Gastrocnemius medialis (tissue), 4 donors: ENCODE measurements at regions of chr18 and their contacts with region 1.

Region 1: DNA sequence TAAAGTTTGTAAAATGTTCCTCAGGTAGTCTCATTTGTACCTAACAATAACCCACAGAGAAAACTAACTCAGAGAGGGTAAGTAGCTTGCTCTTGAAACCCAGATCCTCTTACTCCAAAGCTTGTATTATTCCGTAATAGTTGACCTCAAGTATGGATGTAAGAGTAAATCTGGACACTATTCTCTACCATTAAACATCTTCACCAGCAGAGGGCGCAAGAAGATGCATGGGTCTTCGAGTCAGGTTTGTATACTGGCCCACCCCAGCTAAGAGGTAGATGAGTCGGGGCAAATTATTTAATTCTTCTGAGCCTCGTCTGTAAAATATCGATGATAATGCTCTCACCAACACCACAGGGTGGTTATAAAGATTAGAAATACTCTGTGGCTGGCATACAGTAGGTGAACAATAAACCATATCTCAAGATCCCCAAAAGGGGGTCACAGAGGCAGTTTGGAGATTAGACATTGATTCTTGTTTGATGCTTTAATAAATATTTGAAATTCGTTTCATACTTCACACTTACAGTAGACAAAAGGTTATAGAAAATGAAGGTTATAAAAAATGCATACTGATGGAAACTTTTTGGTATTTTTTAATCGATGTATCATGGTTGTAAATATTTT is 3.5 kb upstream of the CABLES1 start:
- DNase-seq: peak in 1 of 2 donors; percentile 28
- ATAC-seq: peak; percentile 49 to 55
- H3K4me3 ChIP-seq: no peak overlapping the region
- H3K27ac ChIP-seq: no peak overlapping the region
- H3K4me1 ChIP-seq: peaks cover 6 to 12% of the 10 kb centered on the region in 2 donors
- H3K27me3 ChIP-seq: peaks cover 7 to 18% (median 7%) of the 10 kb centered on the region in 3 donors
- CTCF ChIP-seq: peak; percentile 71 to 81 (median 75)
- POLR2A ChIP-seq: no peak

Region 2: DNA sequence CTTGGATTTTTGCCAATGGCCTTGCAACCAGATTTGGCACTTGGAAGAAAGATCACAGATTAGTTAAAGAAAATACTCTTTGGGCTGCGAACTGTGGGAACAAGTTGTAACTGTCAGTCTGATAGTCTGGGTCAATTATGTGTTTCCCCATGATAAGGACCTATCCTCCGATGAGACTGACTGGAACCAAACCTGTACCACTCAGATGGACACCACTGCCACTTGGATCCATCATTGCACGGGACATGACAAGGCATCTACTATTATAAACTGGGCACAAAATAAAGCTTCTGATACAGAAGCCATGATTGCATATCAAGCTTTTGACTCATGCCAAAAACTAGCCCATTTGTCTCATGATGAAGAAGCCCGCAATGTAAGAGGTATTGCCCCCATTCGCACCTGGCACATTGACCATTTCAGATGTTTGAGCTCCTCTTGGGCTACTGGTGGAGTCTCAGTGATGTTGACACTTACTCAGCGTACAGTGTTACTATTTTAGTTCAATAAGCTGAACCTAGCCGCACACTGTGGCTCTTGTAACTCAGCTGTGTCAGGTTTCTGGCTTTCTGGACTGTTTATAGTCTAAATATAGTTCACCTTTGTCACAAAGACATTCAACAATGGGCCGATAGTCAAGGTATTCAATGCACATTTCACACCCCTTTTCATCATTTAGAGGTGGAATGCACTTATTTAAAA is 378.5 kb before region 1 on chr18:
- in situ Hi-C with region 1: no loop called
- intact Hi-C with region 1: no loop called
- DNase-seq: peak; percentile 14 to 32
- ATAC-seq: peak; percentile 97 to 98
- H3K4me3 ChIP-seq: no peak overlapping the region
- H3K27ac ChIP-seq: peak overlapping the region in 3 of 4 donors; percentile 3 to 65 (median 41)
- H3K4me1 ChIP-seq: peaks cover 6 to 12% of the 10 kb centered on the region in 2 donors
- H3K27me3 ChIP-seq: no peaks in the 10 kb centered on the region
- CTCF ChIP-seq: no peak
- POLR2A ChIP-seq: no peak

Region 3: GRCh38 chr18:23356915-23357601 is 225.3 kb after region 1 on chr18:
- in situ Hi-C with region 1: loop called in 1 of 4 experiments (anchors 5 kb)
- intact Hi-C with region 1: loop called (anchors 1 kb)
- DNase-seq: no peak
- ATAC-seq: peak; percentile 27 to 42
- H3K4me3 ChIP-seq: no peak overlapping the region
- H3K27ac ChIP-seq: peak overlapping the region; percentile 42 to 66 (median 50)
- H3K4me1 ChIP-seq: peaks cover 9 to 24% of the 10 kb centered on the region in 2 donors
- H3K27me3 ChIP-seq: no peaks in the 10 kb centered on the region
- CTCF ChIP-seq: no peak
- POLR2A ChIP-seq: no peak

Region 4: DNA sequence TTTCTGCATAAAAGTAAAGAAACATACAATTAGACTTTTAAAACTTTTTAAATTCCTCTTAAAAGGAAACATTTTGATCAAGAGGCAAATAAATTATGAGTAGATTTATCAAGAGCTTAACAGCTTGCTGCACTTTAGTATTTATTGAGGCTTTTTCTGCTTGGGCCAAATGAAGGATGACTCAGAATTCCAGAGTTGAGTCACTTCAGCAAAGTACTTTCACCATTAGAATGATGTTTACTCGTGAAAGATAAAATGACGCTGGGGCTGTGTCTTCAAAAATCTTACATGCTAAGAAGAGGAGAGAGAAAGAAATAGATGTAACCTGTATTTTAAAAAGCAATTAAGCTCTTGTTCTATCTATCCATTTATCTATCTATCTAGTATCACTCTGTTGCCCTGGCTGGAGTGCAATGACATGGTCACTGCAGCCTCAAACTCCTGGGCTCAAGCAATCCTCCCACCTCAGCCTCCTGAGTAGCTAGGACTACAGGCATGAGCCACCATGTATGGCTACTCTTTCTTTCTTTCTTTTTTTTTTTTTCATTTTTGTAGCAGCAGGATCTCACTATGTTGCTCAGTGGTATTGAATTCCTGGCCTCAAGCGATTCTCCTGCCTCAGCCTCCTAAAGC is 246.0 kb after region 1 on chr18:
- in situ Hi-C with region 1: loop called in 3 of 4 experiments (anchors 5 to 25 kb)
- intact Hi-C with region 1: loop called (anchors 2 kb)
- DNase-seq: no peak
- ATAC-seq: peak; percentile 68 to 75
- H3K4me3 ChIP-seq: no peak overlapping the region
- H3K27ac ChIP-seq: peak overlapping the region; percentile 42 to 64 (median 46)
- H3K4me1 ChIP-seq: peaks cover 7 to 9% of the 10 kb centered on the region in 2 donors
- H3K27me3 ChIP-seq: no peaks in the 10 kb centered on the region
- CTCF ChIP-seq: no peak
- POLR2A ChIP-seq: no peak

Region 5: GRCh38 chr18:23412351-23412964 is 280.7 kb after region 1 on chr18:
- in situ Hi-C with region 1: no loop called
- intact Hi-C with region 1: loop called (anchors 2 kb)
- DNase-seq: no peak
- ATAC-seq: no peak
- H3K4me3 ChIP-seq: no peak overlapping the region
- H3K27ac ChIP-seq: no peak overlapping the region
- H3K4me1 ChIP-seq: no peaks in the 10 kb centered on the region
- H3K27me3 ChIP-seq: no peaks in the 10 kb centered on the region
- CTCF ChIP-seq: no peak
- POLR2A ChIP-seq: no peak

Region 6: DNA sequence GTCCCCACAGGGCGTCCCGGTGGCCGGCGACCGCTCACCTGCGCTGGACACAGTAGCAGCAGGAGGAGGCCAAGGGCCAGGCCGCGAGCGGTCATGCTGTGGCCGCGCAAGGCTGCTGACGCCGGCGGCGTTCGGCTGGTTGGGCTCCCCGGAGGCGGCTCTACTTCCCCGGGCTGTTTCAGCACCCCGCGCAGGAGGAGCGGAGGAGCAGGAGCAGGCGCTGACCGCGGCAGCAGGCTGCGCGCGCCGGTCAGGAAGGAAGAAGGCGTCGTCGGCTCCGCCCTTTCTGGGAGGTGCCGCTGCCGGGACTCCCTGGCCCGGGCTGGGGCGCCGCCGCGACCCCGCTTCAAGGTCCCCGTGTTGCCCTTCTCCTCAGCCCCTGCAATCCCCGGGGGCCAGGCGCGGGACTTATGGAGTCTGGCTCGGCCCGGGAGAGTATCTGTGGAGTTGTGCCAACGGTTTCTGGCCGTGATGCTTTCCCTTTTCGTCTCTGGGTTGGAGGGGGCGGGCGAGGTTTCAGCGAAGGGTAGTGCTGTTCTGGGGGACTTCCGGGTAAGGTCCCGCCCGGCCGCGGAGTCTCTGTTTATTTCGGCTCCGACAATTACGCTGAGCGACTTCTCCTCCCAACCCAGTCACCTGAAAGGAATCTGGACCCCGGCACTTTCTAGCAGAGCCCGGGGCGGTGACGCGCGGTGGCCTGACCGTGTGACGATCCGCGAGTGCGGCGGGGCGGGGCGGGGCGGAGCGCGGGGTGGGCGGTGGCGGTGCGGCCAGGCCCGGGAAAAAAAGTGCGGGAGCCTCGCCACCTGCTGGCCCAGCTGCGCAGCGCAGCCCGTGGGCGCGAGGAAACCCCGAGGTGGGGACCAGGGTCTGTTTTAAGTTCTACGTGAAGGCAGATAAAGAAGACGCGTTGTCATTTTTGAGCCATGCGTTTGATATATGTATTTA is 454.7 kb after region 1 on chr18 and contains the start of gene NPC1:
- in situ Hi-C with region 1: loop called in 1 of 4 experiments (anchors 25 kb)
- intact Hi-C with region 1: loop called (anchors 2 kb)
- DNase-seq: peak; percentile 87 to 89
- ATAC-seq: peak; percentile 91 to 93
- H3K4me3 ChIP-seq: peak within 1 kb of the TSS; percentile 77 to 97 (median 90)
- H3K27ac ChIP-seq: peak within 1 kb of the TSS; percentile 95 to 99 (median 97)
- H3K4me1 ChIP-seq: peaks cover 20 to 22% of the 10 kb centered on the region in 2 donors
- H3K27me3 ChIP-seq: no peaks in the 10 kb centered on the region
- CTCF ChIP-seq: peak; percentile 68 to 97 (median 90)
- POLR2A ChIP-seq: peak; percentile 94
- total RNA-seq, gene NPC1: 35.7 to 99.4 (median 46.2) TPM

Region 7: GRCh38 chr18:24271381-24272331 is 1139.8 kb after region 1 on chr18:
- in situ Hi-C with region 1: no loop called
- intact Hi-C with region 1: loop called (anchors 10 kb)
- DNase-seq: peak; percentile 64 to 77
- ATAC-seq: peak; percentile 76 to 81
- H3K4me3 ChIP-seq: peak overlapping the region; percentile 81 to 94 (median 86)
- H3K27ac ChIP-seq: peak overlapping the region; percentile 88 to 94 (median 91)
- H3K4me1 ChIP-seq: peaks cover 13 to 54% of the 10 kb centered on the region in 2 donors
- H3K27me3 ChIP-seq: no peaks in the 10 kb centered on the region
- CTCF ChIP-seq: peak in 2 of 5 experiments; percentile 41 to 49
- POLR2A ChIP-seq: peak; percentile 25 to 44